ENCODE measurements at regions of chr9 and their contacts with region 1.

Region 1: GRCh38 chr9:76191493-76191892 is 202.7 kb downstream of the RFK start:
- DNase-seq: no peak
- H3K4me3 ChIP-seq: no peak overlapping the region
- H3K27ac ChIP-seq: no peak overlapping the region
- H3K4me1 ChIP-seq: no peaks in the 10 kb centered on the region
- H3K27me3 ChIP-seq: no peaks in the 10 kb centered on the region
- CTCF ChIP-seq: no peak
- POLR2A ChIP-seq: no peak

Region 2: DNA sequence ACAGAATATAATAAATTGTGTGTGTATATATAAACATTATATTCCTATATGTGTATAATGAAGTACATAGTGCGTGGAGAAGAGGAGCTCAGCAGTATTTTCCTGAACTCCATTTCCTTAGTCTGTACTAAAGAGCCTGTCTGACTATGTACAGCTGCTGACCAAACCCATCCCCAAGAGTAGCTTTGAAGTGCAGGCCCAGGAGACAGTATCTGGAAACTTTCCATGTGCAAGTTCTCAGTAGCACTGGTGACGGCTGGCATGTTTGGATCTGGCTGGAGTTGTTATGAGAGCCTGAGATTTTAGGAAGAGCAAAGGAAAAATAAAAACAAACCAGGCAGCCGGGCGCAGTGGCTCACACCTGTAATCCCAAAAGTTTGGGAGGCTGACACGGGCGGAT is 41.5 kb before region 1 on chr9:
- intact Hi-C with region 1: loop called (anchors 2 kb)
- DNase-seq: no peak
- H3K4me3 ChIP-seq: no peak overlapping the region
- H3K27ac ChIP-seq: no peak overlapping the region
- H3K4me1 ChIP-seq: no peaks in the 10 kb centered on the region
- H3K27me3 ChIP-seq: no peaks in the 10 kb centered on the region
- CTCF ChIP-seq: no peak
- POLR2A ChIP-seq: no peak

Region 3: GRCh38 chr9:76451234-76451633 is 259.7 kb after region 1 on chr9:
- intact Hi-C with region 1: no loop called
- DNase-seq: no peak
- H3K4me3 ChIP-seq: no peak overlapping the region
- H3K27ac ChIP-seq: no peak overlapping the region
- H3K4me1 ChIP-seq: no peaks in the 10 kb centered on the region
- H3K27me3 ChIP-seq: no peaks in the 10 kb centered on the region
- CTCF ChIP-seq: no peak
- POLR2A ChIP-seq: no peak